ENCODE measurements at regions of chr1 and their contacts with region 1.

Region 1: DNA sequence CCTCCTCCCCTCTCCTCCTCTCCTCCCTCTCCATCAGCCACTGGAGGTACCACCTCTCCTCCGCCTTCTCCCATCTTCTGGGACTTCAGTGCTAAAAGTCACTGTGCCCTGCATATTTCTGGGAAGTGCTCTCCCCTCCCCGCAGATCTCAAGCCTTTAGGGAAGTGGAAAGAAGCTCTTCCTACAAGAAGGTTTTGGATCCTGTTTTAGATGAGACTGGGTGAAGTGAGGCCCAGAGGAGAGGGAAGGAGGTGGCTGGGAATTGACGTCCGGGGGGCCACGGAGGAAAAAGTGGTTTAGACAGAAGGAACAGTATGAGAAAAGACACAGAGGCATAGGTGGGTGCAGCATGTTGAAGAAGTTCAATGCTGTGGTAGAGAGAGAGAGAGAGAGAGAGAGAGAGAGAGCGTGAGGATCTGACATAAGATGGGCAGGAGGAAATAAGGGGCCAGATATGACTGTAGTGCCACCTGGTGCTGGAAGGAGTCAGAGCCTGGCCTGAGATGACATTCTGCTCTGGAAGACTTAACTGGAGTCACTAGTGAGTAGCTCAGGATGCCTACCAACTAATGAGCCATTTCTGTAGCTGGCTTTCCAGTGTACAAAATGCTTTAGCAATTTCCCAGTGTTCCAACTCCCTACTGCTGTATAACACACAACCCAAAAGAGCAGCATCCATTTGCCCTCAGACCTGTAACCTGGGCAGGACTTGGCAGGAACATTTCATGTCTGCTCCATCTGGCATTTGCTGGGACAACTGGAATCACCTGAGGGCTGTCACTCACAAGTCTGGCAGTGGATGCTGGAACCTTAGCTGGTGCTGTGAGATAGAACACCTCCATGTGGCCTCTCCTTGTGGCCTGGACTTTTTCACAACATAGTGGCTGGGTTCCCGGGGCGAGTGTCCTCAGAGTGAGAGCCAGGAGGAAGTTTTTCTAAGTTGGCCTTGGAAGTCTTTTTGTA is 16.6 kb upstream of the ZSCAN20 start:
- DNase-seq: peak; percentile 26
- ATAC-seq: peak; percentile 85
- H3K4me3 ChIP-seq: no peak overlapping the region
- H3K27ac ChIP-seq: no peak overlapping the region
- H3K4me1 ChIP-seq: no peaks in the 10 kb centered on the region
- H3K27me3 ChIP-seq: peaks cover 0 to 14% of the 10 kb centered on the region in 2 experiments; a peak in 1 of 5 replicates
- CTCF ChIP-seq: peak; percentile 77
- EP300 ChIP-seq: no peak
- POLR2A ChIP-seq: no peak
- RAD21 ChIP-seq: no peak

Region 2: GRCh38 chr1:32953495-32953894 is 502.3 kb before region 1 on chr1:
- CTCF ChIA-PET with region 1: no interaction called
- POLR2A ChIA-PET with region 1: no interaction called
- in situ Hi-C with region 1: no loop called
- intact Hi-C with region 1: no loop called
- DNase-seq: no peak
- ATAC-seq: no peak
- H3K4me3 ChIP-seq: no peak overlapping the region
- H3K27ac ChIP-seq: no peak overlapping the region
- H3K4me1 ChIP-seq: peaks cover 24% of the 10 kb centered on the region
- H3K27me3 ChIP-seq: no peaks in the 10 kb centered on the region
- CTCF ChIP-seq: no peak
- EP300 ChIP-seq: no peak
- POLR2A ChIP-seq: no peak
- RAD21 ChIP-seq: no peak

Region 3: DNA sequence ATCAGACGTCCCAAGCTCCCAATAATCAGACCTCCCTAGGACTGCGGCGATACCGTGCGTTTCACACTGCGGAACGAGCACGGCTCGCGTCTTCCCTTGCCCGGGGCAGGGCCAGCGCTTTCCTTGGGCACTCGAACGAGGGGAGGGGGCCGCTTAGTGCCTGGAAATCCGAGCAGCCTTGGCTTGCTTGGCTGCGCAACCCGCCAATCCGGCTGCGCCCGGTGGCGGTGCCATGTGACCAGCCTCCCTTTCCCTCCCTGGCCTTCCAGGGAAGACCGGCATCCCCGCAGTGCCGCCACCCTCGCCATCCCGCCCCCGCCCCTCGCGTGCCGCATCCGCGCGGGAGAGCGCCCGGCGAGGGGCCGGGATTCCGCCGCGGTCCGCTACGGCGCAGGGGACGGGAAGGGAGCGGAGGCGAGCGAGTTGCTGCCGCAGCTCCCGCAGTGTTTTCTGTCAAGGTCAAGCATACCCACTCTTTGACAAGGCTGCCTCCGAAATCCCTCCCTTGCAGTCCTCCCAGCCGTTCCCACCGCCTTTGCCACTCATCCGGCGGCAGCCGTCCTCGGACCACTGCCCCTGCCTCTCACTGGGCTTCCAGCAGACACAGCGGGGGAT is 482.9 kb before region 1 on chr1:
- CTCF ChIA-PET with region 1: no interaction called
- POLR2A ChIA-PET with region 1: no interaction called
- in situ Hi-C with region 1: no loop called
- intact Hi-C with region 1: no loop called
- DNase-seq: no peak
- ATAC-seq: peak; percentile 77
- H3K4me3 ChIP-seq: peak overlapping the region; percentile 45 to 77 (median 54)
- H3K27ac ChIP-seq: no peak overlapping the region
- H3K4me1 ChIP-seq: peaks cover 11% of the 10 kb centered on the region
- H3K27me3 ChIP-seq: peaks cover 5 to 30% of the 10 kb centered on the region in 2 experiments; a peak in 3 of 5 replicates
- CTCF ChIP-seq: no peak
- EP300 ChIP-seq: no peak
- POLR2A ChIP-seq: no peak
- RAD21 ChIP-seq: no peak

Region 4: GRCh38 chr1:33219881-33220661 is 235.7 kb before region 1 on chr1:
- CTCF ChIA-PET with region 1: no interaction called
- POLR2A ChIA-PET with region 1: no interaction called
- in situ Hi-C with region 1: no loop called
- intact Hi-C with region 1: loop called (anchors 2 kb)
- DNase-seq: no peak
- ATAC-seq: peak; percentile 78
- H3K4me3 ChIP-seq: no peak overlapping the region
- H3K27ac ChIP-seq: no peak overlapping the region
- H3K4me1 ChIP-seq: peaks cover 30% of the 10 kb centered on the region; the same call in 1 of the 2 replicates
- H3K27me3 ChIP-seq: peaks cover 0 to 4% of the 10 kb centered on the region in 2 experiments; a peak in 1 of 5 replicates
- CTCF ChIP-seq: peak; percentile 42
- EP300 ChIP-seq: no peak
- POLR2A ChIP-seq: no peak
- RAD21 ChIP-seq: no peak

Region 5: DNA sequence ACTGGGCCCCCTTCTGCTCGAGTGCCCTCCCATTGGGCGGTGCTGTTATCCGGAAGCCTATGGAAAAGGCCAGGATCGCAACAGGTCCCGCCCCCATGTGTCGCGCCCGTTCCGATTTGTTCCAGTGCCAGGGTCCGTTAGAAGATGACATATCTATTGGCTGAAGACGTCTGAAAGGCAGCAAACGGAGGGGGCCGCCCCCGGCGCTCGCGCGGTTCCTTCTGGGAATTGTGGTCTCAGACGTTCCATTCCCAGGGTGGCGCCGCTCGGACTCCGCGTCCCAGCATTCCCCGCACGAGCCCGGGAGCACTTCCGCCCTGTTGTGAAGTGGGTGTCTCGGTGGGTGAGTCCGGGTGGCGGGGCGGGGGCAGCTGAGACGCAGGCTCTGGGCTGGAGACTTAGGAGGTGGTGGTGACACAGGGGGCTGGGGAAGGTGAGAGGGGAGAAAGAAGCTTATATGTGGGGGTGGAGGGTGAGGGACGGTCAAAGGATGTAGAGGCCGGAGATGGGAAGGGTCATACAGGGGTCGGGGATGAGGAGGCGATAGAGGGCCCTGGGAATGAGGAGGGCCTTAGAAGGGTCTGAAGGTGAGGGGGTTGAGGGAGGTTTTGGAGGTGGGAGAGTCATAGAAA is 16.6 kb after region 1 on chr1 and contains the start of gene ZSCAN20:
- CTCF ChIA-PET with region 1: no interaction called
- POLR2A ChIA-PET with region 1: no interaction called
- in situ Hi-C with region 1: no loop called
- intact Hi-C with region 1: no loop called
- DNase-seq: peak; percentile 96
- ATAC-seq: peak; percentile 97
- H3K4me3 ChIP-seq: peak within 1 kb of the TSS; percentile 66 to 91 (median 78)
- H3K27ac ChIP-seq: no peak within 1 kb of the TSS
- H3K4me1 ChIP-seq: peaks cover 29% of the 10 kb centered on the region
- H3K27me3 ChIP-seq: peaks cover 0 to 2% of the 10 kb centered on the region in 2 experiments; a peak in 1 of 5 replicates
- CTCF ChIP-seq: no peak
- EP300 ChIP-seq: no peak
- POLR2A ChIP-seq: no peak; a peak in 1 of 4 replicates
- RAD21 ChIP-seq: no peak
- total RNA-seq, gene ZSCAN20: 2.8 TPM in 2 replicates

Region 6: GRCh38 chr1:33500547-33500946 is 44.7 kb after region 1 on chr1:
- CTCF ChIA-PET with region 1: no interaction called
- POLR2A ChIA-PET with region 1: no interaction called
- in situ Hi-C with region 1: no loop called
- intact Hi-C with region 1: no loop called
- DNase-seq: no peak
- ATAC-seq: no peak
- H3K4me3 ChIP-seq: no peak overlapping the region
- H3K27ac ChIP-seq: no peak overlapping the region
- H3K4me1 ChIP-seq: peaks cover 20% of the 10 kb centered on the region
- H3K27me3 ChIP-seq: no peaks in the 10 kb centered on the region
- CTCF ChIP-seq: no peak
- EP300 ChIP-seq: no peak
- POLR2A ChIP-seq: no peak
- RAD21 ChIP-seq: no peak

Measured in HepG2 (cell line).